Endothelial cell of umbilical vein (primary cell): ENCODE measurements at regions of chr4 and their contacts with region 1.

Region 1: DNA sequence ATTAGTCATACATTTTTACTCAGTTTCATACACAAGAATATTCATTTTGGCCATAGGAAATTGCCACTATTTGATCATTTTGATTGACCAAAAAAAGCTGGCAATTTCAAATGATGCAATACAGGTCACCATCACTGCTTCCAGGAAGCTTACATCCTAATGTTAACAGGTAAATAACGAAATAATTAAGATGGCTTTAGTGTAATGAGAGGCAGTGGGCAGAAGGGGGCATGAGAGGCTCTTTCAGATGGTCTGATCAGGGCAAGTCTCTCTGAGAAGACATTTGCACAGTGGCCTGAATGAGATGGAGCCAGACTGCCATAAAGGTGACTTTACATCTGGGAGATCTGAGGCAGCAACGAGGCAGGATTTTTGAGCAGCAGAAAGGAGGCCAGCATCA is 170.7 kb downstream of the SLIT2 start:
- DNase-seq: peak; percentile 78
- H3K4me3 ChIP-seq: no peak overlapping the region
- H3K27ac ChIP-seq: no peak overlapping the region
- H3K4me1 ChIP-seq: peaks cover 9% of the 10 kb centered on the region
- H3K27me3 ChIP-seq: no peaks in the 10 kb centered on the region
- CTCF ChIP-seq: peak; percentile 51 to 63
- POLR2A ChIP-seq: no peak

Region 2: GRCh38 chr4:18689308-18690115 is 1732.9 kb before region 1 on chr4:
- CTCF ChIA-PET with region 1: no interaction called
- POLR2A ChIA-PET with region 1: no interaction called
- dilution Hi-C with region 1: no loop called
- intact Hi-C with region 1: loop called (anchors 2 kb)
- DNase-seq: peak; percentile 77
- H3K4me3 ChIP-seq: no peak overlapping the region
- H3K27ac ChIP-seq: no peak overlapping the region
- H3K4me1 ChIP-seq: peaks cover 2% of the 10 kb centered on the region
- H3K27me3 ChIP-seq: no peaks in the 10 kb centered on the region
- CTCF ChIP-seq: peak; percentile 57 to 68
- POLR2A ChIP-seq: no peak

Region 3: DNA sequence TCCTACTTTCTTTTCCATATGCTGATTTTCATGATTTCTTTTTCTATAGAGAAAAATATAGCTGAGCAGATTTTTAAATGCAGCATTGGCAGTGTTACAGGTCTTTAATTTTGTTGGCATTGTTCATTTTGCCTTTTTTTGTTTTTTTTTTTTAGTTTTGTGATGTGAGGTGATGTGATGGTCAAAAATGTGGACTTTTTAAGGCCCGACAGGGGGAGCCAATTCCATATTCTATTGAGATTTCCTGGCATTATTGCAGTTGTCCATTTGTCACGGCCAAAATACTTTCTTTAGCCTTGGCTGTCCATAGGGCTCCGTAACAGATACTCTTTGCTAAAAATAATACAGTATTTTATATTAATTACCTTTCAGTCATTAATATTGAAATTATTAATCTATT is 122.9 kb before region 1 on chr4:
- CTCF ChIA-PET with region 1: interaction called, 3 read pairs
- POLR2A ChIA-PET with region 1: no interaction called
- dilution Hi-C with region 1: no loop called
- intact Hi-C with region 1: loop called (anchors 2 kb)
- DNase-seq: peak; percentile 58
- H3K4me3 ChIP-seq: no peak overlapping the region
- H3K27ac ChIP-seq: no peak overlapping the region
- H3K4me1 ChIP-seq: no peaks in the 10 kb centered on the region
- H3K27me3 ChIP-seq: no peaks in the 10 kb centered on the region
- CTCF ChIP-seq: peak; percentile 40 to 48
- POLR2A ChIP-seq: no peak

Region 4: DNA sequence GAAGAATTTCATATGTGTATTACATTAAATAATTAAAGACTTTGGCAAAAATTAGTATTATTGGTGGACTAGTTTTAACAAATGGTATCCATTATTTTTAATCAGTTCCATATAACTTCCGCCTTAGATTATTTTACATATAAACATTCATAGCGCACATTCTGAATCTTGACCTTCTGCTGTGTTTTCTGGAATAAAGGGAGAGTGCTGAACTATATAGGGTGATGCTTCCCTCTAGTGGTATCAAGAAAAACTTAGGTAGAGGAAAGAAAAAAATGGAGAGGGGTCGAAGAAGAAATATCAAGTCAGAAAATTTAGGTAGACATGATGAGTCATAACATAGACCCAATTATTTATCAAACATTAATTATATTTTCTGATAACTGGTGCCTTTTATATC is 122.2 kb after region 1 on chr4:
- CTCF ChIA-PET with region 1: interaction called, 37 read pairs
- POLR2A ChIA-PET with region 1: no interaction called
- dilution Hi-C with region 1: no loop called
- intact Hi-C with region 1: loop called (anchors 1 kb)
- DNase-seq: peak; percentile 74
- H3K4me3 ChIP-seq: no peak overlapping the region
- H3K27ac ChIP-seq: no peak overlapping the region
- H3K4me1 ChIP-seq: no peaks in the 10 kb centered on the region
- H3K27me3 ChIP-seq: no peaks in the 10 kb centered on the region
- CTCF ChIP-seq: peak; percentile 23 to 38
- POLR2A ChIP-seq: no peak

Region 5: DNA sequence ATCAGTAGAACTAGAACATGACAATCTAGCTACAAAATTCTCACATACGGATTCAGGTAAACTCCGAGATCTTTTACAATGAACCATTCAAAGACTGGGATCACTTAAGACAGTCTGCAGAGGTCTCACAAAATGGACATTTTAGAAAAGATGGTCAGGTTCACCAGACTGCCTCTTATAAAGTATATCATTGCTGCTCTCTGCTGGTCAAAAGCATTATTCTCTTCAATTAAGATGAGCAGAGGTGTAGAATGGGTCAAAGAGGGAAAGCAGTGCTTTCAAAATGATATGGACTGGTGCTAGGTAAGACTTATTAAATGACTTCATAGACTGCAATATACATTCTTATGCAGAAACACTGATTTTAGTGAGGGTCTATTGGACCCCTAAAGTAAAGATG is 712.6 kb after region 1 on chr4:
- CTCF ChIA-PET with region 1: no interaction called
- POLR2A ChIA-PET with region 1: no interaction called
- dilution Hi-C with region 1: no loop called
- intact Hi-C with region 1: loop called (anchors 10 kb)
- DNase-seq: peak; percentile 62
- H3K4me3 ChIP-seq: no peak overlapping the region
- H3K27ac ChIP-seq: no peak overlapping the region
- H3K4me1 ChIP-seq: peaks cover 18% of the 10 kb centered on the region
- H3K27me3 ChIP-seq: no peaks in the 10 kb centered on the region
- CTCF ChIP-seq: peak; percentile 29 to 30
- POLR2A ChIP-seq: no peak

Region 6: DNA sequence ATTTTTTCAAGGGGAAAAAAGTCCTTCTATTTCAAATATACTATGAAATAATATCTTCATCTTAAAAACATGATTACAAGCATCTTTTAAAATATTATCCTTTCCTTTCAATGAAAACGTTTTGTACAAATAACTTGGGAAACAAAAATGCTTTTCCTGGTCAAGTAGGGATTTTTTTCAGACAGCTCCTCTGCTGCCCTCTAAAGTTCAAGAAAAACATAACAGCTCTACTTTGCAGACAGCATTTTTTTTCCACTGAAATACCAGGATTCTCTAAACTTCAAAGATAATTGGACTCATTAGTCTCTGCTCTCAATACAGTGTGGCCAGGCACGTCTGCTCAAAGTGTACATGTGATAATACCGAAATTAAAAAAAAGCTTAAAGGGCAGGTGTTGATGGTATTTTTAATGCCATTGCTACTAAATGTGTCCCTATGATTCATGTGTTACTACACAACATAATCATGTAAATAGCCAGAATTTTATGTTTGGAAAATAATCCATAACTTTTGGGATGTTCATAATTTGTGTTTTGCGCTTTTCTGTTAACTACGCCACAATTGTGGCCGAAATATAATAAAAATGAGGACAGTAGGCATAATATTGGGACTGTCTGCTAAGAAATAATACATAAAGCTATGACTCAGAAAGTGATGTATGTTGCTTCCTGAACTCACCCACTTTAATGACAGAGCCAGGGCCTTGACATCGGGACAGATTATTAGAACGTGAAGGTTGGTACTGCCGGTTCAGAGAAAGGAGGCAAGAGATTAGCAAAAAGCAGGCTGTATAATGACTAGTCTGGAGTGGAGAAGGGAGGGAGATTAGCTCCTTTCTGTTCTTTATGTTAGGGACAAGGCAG is 1047.3 kb after region 1 on chr4:
- CTCF ChIA-PET with region 1: no interaction called
- POLR2A ChIA-PET with region 1: no interaction called
- dilution Hi-C with region 1: no loop called
- intact Hi-C with region 1: loop called (anchors 1 kb)
- DNase-seq: peak; percentile 40
- H3K4me3 ChIP-seq: no peak overlapping the region
- H3K27ac ChIP-seq: no peak overlapping the region
- H3K4me1 ChIP-seq: peaks cover 5% of the 10 kb centered on the region
- H3K27me3 ChIP-seq: peaks cover 6 to 9% of the 10 kb centered on the region in 2 experiments
- CTCF ChIP-seq: peak; percentile 25 to 54
- POLR2A ChIP-seq: no peak